B cell (primary cell): ENCODE measurements at regions of chr4 and their contacts with region 1.

Region 1: GRCh38 chr4:150242820-150243458 is 164.7 kb downstream of the DCLK2 start:
- DNase-seq: peak; percentile 45
- ATAC-seq: no peak
- H3K4me3 ChIP-seq: no peak overlapping the region
- H3K4me3 Mint-ChIP-seq: no peak overlapping the region
- H3K27ac ChIP-seq: no peak overlapping the region
- H3K27ac Mint-ChIP-seq: no peak overlapping the region
- H3K4me1 ChIP-seq: no peaks in the 10 kb centered on the region
- H3K4me1 Mint-ChIP-seq: no peaks in the 10 kb centered on the region
- H3K27me3 ChIP-seq: no peaks in the 10 kb centered on the region
- H3K27me3 Mint-ChIP-seq: no peaks in the 10 kb centered on the region
- CTCF ChIP-seq: peak; percentile 85

Region 2: GRCh38 chr4:149980941-149981340 is 262.0 kb before region 1 on chr4:
- CTCF ChIA-PET with region 1: interaction called, 7 read pairs
- POLR2A ChIA-PET with region 1: no interaction called
- intact Hi-C with region 1: loop called (anchors 1 kb)
- DNase-seq: peak; percentile 51
- ATAC-seq: peak; percentile 41
- H3K4me3 ChIP-seq: no peak overlapping the region
- H3K4me3 Mint-ChIP-seq: no peak overlapping the region
- H3K27ac ChIP-seq: no peak overlapping the region
- H3K27ac Mint-ChIP-seq: no peak overlapping the region
- H3K4me1 ChIP-seq: no peaks in the 10 kb centered on the region
- H3K4me1 Mint-ChIP-seq: no peaks in the 10 kb centered on the region
- H3K27me3 ChIP-seq: no peaks in the 10 kb centered on the region
- H3K27me3 Mint-ChIP-seq: peaks cover 3% of the 10 kb centered on the region
- CTCF ChIP-seq: peak; percentile 88

Region 3: GRCh38 chr4:149999485-150000074 is 243.4 kb before region 1 on chr4:
- CTCF ChIA-PET with region 1: interaction called, 14 read pairs
- POLR2A ChIA-PET with region 1: no interaction called
- intact Hi-C with region 1: loop called (anchors 1 kb)
- DNase-seq: peak; percentile 52
- ATAC-seq: no peak
- H3K4me3 ChIP-seq: no peak overlapping the region
- H3K4me3 Mint-ChIP-seq: no peak overlapping the region
- H3K27ac ChIP-seq: no peak overlapping the region
- H3K27ac Mint-ChIP-seq: no peak overlapping the region
- H3K4me1 ChIP-seq: no peaks in the 10 kb centered on the region
- H3K4me1 Mint-ChIP-seq: peaks cover 2% of the 10 kb centered on the region
- H3K27me3 ChIP-seq: no peaks in the 10 kb centered on the region
- H3K27me3 Mint-ChIP-seq: peaks cover 5% of the 10 kb centered on the region
- CTCF ChIP-seq: peak; percentile 75

Region 4: DNA sequence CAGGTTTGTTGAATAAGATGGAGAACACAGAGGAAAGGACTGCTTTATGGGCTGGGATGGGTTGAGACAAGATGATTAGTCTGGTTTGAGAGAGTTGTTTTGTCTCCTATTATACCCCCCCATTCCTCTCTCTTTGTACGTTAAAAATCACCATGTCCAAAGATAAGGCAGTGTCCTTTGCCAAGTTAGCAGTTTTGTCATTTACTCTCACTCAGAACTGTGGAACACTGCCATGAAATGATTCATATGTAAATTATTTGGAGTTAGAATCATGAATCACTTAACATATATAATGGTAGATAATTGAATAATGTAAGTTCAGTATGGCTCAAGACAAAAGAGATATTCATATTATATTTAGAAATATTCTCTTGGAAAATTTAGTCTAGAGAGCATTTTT is 13.4 kb before region 1 on chr4:
- CTCF ChIA-PET with region 1: interaction called, 11 read pairs
- POLR2A ChIA-PET with region 1: no interaction called
- intact Hi-C with region 1: no loop called
- DNase-seq: no peak
- ATAC-seq: no peak
- H3K4me3 ChIP-seq: no peak overlapping the region
- H3K4me3 Mint-ChIP-seq: no peak overlapping the region
- H3K27ac ChIP-seq: no peak overlapping the region
- H3K27ac Mint-ChIP-seq: no peak overlapping the region
- H3K4me1 ChIP-seq: no peaks in the 10 kb centered on the region
- H3K4me1 Mint-ChIP-seq: no peaks in the 10 kb centered on the region
- H3K27me3 ChIP-seq: no peaks in the 10 kb centered on the region
- H3K27me3 Mint-ChIP-seq: peaks cover 11% of the 10 kb centered on the region
- CTCF ChIP-seq: no peak